CD8-positive, alpha-beta T cell (primary cell): ENCODE measurements at regions of chr7 and their contacts with region 1.

Region 1: DNA sequence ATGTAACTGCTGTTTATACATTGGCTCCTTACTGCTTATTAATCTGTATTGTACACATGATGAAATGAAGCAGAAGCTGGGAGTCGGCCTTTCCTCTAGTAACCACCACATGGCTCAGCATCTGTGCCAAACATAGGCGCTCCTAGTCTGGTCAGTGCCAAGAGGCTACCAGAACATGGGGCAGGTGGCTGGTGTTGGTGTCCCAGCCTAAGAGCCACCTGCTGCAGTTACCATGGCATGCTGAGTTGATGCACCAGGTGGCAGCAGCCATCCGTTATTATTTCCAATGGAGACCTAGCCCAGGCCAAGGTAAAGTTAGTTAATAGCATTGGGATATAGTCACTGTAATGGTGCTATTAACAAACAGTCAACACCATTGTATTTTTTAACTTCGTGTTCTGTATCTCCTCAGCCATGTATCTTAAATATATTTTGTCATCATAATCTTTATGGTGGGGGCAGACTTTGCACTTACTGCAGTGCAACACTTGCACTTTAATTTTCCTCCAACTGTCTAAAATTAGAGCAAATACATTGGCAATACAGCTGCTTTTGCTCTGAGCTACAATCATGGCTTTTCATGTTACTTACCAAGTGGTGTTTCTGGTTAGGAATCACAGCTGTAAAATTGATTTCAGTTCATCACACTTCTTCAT is 33.1 kb downstream of the HBP1 start:
- DNase-seq: peak in 4 of 9 experiments; percentile 16 to 48 (median 37)
- ATAC-seq: peak; percentile 57
- H3K4me3 ChIP-seq: no peak overlapping the region
- H3K4me3 Mint-ChIP-seq: no peak overlapping the region
- H3K27ac ChIP-seq: no peak overlapping the region
- H3K27ac Mint-ChIP-seq: no peak overlapping the region
- H3K4me1 ChIP-seq: no peaks in the 10 kb centered on the region
- H3K4me1 Mint-ChIP-seq: no peaks in the 10 kb centered on the region
- H3K27me3 ChIP-seq: no peaks in the 10 kb centered on the region
- H3K27me3 Mint-ChIP-seq: no peaks in the 10 kb centered on the region
- CTCF ChIP-seq: peak; percentile 37

Region 2: GRCh38 chr7:106216517-106216922 is 985.4 kb before region 1 on chr7:
- CTCF ChIA-PET with region 1: no interaction called
- POLR2A ChIA-PET with region 1: no interaction called
- intact Hi-C with region 1: no loop called
- DNase-seq: no peak
- ATAC-seq: no peak
- H3K4me3 ChIP-seq: no peak overlapping the region
- H3K4me3 Mint-ChIP-seq: no peak overlapping the region
- H3K27ac ChIP-seq: no peak overlapping the region
- H3K27ac Mint-ChIP-seq: no peak overlapping the region
- H3K4me1 ChIP-seq: no peaks in the 10 kb centered on the region
- H3K4me1 Mint-ChIP-seq: peaks cover 3% of the 10 kb centered on the region
- H3K27me3 ChIP-seq: no peaks in the 10 kb centered on the region
- H3K27me3 Mint-ChIP-seq: peaks cover 3% of the 10 kb centered on the region
- CTCF ChIP-seq: no peak

Region 3: GRCh38 chr7:107180378-107180777 is 21.5 kb before region 1 on chr7:
- CTCF ChIA-PET with region 1: no interaction called
- POLR2A ChIA-PET with region 1: no interaction called
- intact Hi-C with region 1: loop called in 1 of 2 experiments (anchors 2 kb)
- DNase-seq: peak in 8 of 9 experiments; percentile 43 to 78 (median 70)
- ATAC-seq: peak; percentile 65
- H3K4me3 ChIP-seq: no peak overlapping the region
- H3K4me3 Mint-ChIP-seq: no peak overlapping the region
- H3K27ac ChIP-seq: no peak overlapping the region
- H3K27ac Mint-ChIP-seq: peak overlapping the region; percentile 8
- H3K4me1 ChIP-seq: peaks cover 33% of the 10 kb centered on the region
- H3K4me1 Mint-ChIP-seq: peaks cover 63% of the 10 kb centered on the region
- H3K27me3 ChIP-seq: no peaks in the 10 kb centered on the region
- H3K27me3 Mint-ChIP-seq: no peaks in the 10 kb centered on the region
- CTCF ChIP-seq: no peak

Region 4: GRCh38 chr7:107186242-107186641 is 15.7 kb before region 1 on chr7:
- CTCF ChIA-PET with region 1: no interaction called
- POLR2A ChIA-PET with region 1: no interaction called
- intact Hi-C with region 1: loop called in 1 of 2 experiments (anchors 2 kb)
- DNase-seq: no peak
- ATAC-seq: no peak
- H3K4me3 ChIP-seq: no peak overlapping the region
- H3K4me3 Mint-ChIP-seq: no peak overlapping the region
- H3K27ac ChIP-seq: no peak overlapping the region
- H3K27ac Mint-ChIP-seq: no peak overlapping the region
- H3K4me1 ChIP-seq: no peaks in the 10 kb centered on the region
- H3K4me1 Mint-ChIP-seq: peaks cover 29% of the 10 kb centered on the region
- H3K27me3 ChIP-seq: no peaks in the 10 kb centered on the region
- H3K27me3 Mint-ChIP-seq: no peaks in the 10 kb centered on the region
- CTCF ChIP-seq: no peak